GM18951 (cell line): ENCODE measurements at regions of chr4 and their contacts with region 1.

Region 1: DNA sequence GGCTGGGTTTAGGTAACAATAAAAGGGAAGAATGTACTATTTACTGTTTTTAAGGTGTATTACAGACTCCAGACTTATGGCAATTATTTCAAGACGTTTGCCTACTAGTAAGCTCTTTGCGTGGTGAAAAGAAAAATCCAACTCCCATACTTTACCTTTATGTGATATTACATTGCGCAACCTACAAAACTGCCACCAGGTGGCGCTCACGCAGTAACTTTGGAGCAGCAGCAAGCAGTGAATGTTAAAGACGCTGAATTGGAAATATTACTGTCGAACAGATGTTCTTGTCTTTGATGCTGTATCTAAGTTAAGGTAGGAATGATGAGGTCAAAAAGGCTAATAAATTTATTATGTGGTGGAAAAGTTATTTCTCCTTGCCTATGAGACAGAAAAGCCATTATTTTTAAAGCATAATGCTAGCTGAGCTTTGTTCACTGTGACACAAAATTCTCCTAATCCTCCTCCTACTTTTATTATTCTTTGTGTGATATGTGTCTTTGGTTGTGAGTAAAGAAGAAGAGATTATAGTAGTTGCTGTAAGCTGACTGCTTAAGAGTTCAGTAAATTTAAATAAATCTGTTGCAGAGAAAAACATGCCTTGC is 1099.8 kb upstream of the TENM3 start:
- POLR2A ChIP-seq: no peak

Region 2: GRCh38 chr4:180811556-180811955 is 331.8 kb before region 1 on chr4:
- in situ Hi-C with region 1: no loop called
- POLR2A ChIP-seq: no peak

Region 3: GRCh38 chr4:181528570-181529184 is 385.3 kb after region 1 on chr4:
- in situ Hi-C with region 1: loop called (anchors 25 kb)
- POLR2A ChIP-seq: no peak